Posterior cingulate gyrus (tissue), 11 donors: ENCODE measurements at regions of chr3 and their contacts with region 1.

Region 1: DNA sequence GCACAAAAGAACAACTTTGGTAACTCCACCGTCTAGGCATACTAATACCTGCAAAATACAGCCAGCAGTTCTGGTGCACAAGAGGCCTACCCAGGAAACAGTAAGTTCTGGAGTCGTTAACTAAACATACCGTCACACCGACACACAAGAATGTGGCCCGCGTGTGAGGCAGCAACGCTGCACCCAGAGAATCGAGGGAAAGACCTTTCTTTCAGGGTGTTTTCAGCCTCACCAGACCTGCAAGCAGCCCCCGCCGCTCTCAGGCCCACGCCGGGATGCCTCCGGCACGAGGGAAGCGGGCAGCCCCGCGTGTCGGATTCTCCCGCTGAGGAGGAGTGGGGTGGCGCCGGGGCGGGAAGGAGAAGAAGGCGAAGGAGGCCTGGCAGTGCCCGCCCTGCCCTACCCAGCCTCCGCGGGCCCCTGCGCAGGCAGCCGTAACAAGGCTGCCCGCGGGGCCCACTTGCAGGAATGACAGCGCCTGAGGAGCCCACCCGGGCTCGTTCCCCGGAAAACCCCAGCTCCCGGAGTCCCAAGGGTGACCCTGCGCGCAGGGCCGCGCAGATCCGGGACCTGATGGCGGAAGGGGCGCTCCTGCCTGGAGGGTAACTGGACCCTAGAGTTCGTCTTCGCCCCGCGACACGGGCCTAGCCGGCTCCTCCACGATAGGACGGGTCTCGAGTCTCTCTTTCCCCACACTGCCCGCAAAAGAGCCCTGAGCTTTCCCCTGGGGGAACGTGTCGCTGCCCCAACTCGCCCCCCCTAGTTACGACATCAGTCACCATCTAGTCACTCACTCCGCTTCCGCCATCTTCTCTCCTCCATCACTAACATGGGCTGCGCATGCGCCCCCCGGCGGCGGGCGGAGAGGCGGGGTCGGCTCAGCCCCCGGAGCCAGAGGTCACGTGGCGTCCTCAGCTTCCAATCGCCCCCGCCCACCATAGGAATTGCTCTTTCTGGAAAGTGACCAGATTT is at the start of gene PHC3:
- DNase-seq: peak; percentile 89 to 99 (median 92)

Region 2: GRCh38 chr3:169923189-169923588 is 258.0 kb before region 1 on chr3:
- intact Hi-C with region 1: no loop called
- DNase-seq: peak in 1 of 10 donors; percentile 16

Region 3: GRCh38 chr3:169966428-169966950 is 214.7 kb before region 1 on chr3 and contains the start of gene SEC62:
- intact Hi-C with region 1: loop called (anchors 2 kb)
- DNase-seq: peak; percentile 92 to 99 (median 96)

Region 4: DNA sequence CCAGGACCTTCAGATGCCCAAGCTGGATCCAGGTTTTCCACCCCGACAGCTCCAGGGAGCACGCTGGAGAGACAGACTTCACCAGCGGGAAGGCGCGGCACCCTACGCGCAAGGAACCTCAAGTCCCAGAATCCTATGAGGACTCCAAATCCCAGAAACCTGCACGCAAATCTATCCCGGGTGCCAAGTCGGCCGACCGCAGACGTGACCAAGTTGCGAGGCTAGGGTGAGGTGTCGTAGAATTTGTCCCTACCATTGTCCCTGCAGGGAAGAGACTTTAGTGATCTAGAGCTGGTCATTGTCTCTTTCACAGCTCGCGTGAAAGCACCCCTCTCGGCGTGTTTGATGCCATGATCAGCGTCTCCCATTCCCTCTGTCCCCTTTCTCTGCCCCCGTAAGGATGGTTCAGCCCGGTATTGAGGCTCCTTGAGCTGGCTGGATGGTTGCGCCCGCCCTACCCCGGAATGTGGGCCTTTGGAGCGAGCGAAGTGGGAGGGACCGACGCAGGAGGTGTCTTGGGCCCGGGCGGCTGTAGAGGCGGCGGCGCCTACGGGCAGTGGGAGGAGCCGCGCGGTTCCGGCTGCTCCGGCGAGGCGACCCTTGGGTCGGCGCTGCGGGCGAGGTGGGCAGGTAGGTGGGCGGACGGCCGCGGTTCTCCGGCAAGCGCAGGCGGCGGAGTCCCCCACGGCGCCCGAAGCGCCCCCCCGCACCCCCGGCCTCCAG is 40.9 kb after region 1 on chr3 and contains the start of gene PRKCI:
- intact Hi-C with region 1: loop called (anchors 1 kb)
- DNase-seq: peak; percentile 88 to 99 (median 94)

Region 5: DNA sequence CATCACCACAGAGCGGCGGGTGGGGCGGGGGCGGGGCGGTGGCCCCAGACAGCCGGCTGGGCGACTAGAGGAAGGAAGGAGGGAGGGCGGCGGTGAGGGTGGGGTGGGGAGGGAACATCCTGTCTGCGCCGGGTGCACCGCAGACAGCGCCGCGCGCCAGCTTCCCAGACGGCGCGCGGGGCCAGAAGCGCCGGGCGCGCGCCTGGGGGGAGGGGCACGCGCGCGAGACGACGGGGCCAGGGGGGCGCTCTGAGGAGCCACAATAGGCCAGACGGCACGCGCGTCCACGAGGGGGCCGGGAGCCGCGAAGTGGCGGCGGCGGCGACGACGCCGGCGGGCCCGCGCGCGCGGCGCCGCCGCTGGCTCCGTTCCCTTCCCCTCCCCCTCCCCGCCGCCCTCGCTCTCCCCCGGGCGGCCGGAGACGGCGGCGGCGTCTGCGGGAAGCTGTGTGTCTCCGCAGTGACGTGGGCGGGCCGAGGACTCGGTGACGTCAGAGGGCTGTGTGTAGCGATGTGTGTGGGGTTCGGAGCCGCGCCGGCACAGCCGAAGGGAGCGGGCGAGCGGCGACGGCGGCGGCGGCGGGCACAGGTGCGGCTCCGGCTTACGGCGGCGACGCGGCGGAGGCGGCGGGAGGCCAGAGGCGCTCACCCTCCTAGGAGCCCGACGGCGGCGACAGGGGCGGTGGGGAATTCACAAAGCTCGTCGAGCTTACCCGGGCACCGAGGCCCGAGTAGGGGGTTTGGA is 176.2 kb after region 1 on chr3 and contains the start of gene SKIL:
- intact Hi-C with region 1: loop called (anchors 5 kb)
- DNase-seq: peak; percentile 91 to 99 (median 94)